Spleen (tissue), 13 donors: ENCODE measurements at regions of chr2 and their contacts with region 1.

Region 1: GRCh38 chr2:142989273-142990204 is 112.1 kb downstream of the KYNU start:
- DNase-seq: no peak
- H3K4me3 ChIP-seq: no peak overlapping the region
- H3K27ac ChIP-seq: no peak overlapping the region
- H3K4me1 ChIP-seq: peaks cover 0 to 12% (median 5%) of the 10 kb centered on the region in 6 donors
- H3K27me3 ChIP-seq: no peaks in the 10 kb centered on the region
- CTCF ChIP-seq: peak in 7 of 11 experiments; percentile 21 to 47 (median 37)
- POLR2A ChIP-seq: no peak

Region 2: DNA sequence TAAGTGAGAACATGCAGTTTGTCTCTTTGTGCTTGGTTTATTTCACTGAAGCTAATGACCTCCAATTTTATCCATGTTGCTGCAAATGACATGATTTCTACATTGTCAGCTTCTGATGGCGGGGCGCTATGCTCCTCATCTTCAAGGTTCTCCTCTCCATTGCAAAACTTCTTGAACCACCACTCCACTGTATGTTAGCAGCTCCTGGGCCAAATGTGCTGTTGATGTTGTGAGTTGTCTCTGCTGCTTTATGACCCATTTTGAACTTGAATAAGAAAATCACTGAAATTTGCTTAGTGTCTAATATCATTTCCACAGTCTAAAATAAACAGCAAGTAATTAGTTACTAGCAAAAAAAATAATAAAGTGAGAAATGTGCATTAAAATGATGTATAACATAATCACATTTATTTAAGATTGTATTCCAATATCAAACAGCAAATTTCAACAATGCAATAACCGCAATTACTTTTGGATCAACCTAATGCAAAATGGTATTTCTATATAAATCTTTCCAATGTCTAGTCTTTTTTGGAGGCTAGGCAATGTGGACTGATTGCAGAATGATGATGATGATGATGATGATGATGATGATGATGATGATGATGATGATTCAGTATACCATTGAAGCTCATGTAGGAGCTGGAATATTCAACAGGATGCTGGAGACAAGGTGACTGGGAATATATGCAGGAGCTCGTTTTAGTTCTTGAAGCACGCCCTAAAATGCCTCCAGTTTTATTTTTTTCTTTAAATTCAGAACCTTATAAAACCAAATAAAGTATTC is 417.0 kb before region 1 on chr2:
- intact Hi-C with region 1: no loop called
- DNase-seq: no peak
- H3K4me3 ChIP-seq: no peak overlapping the region
- H3K27ac ChIP-seq: no peak overlapping the region
- H3K4me1 ChIP-seq: no peaks in the 10 kb centered on the region
- H3K27me3 ChIP-seq: no peaks in the 10 kb centered on the region
- CTCF ChIP-seq: no peak
- POLR2A ChIP-seq: no peak

Region 3: DNA sequence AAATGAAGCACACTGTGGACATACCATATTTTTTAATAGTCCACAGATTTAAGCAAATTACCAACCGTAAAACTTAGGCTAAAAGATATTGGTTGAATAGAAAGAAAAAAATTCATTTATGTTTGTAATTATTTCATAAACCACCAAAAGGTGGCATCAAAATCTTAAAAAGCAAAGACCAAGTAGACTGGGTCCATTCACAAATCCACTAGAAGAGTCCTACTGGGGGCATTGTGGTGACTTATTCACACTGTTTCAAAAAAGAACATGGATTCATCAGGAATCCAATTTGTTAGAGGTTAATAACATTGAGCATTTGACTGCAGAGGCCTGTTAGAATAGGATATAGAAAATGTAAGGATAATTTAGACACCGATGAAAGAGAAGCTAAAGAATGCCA is 307.0 kb before region 1 on chr2:
- intact Hi-C with region 1: loop called (anchors 10 kb)
- DNase-seq: no peak
- H3K4me3 ChIP-seq: no peak overlapping the region
- H3K27ac ChIP-seq: no peak overlapping the region
- H3K4me1 ChIP-seq: no peaks in the 10 kb centered on the region
- H3K27me3 ChIP-seq: no peaks in the 10 kb centered on the region
- CTCF ChIP-seq: no peak
- POLR2A ChIP-seq: no peak